Activated CD4-positive, alpha-beta T cell treated with anti-CD3 and anti-CD28 coated beads, Interleukin-2, amount 10 ng/mL, durations not matched to agents 24 days and 14 days (primary cell): ENCODE measurements at regions of chr2 and their contacts with region 1.

Region 1: DNA sequence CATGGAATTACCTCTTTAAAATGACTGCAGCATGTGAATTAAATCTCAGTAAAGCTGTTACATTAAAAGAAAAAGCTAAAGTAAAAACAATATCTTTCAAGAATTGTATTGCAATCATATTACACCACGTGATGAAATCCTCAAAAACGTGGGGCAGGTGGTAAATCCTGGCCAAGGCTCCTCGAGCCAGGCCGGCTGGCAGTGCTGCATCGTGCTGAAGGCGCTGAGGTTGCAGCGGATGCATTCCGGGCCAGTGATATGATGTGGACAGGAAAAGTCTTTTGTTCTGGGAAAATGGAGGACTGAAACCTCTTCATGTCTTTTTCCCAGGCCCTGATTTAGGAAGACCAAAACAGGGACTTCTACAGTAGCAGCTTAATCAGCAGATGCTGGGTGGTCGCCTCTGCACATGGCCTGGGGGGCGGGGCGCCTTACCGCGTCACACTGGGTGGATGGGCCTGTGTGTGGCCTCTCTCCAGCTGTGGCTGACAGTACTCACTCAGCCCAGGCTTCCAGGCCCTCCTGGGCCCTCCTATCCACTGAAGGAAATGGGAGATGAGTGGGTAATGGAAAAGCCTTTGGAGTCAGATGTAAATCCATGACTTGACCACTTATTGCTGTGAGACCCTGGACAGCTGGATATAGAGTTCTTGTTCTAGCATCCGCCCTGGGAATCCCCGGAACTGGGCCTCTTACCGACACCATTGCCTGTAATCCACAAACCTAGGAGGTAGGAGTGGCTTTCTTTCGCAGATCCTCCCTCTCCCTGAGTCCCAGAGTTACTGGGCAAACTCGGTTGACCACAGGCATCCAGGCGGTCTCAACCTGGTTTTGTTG is 45.1 kb downstream of the PROC start:
- DNase-seq: no peak
- H3K4me3 Mint-ChIP-seq: no peak overlapping the region
- H3K27ac Mint-ChIP-seq: no peak overlapping the region
- H3K4me1 Mint-ChIP-seq: peaks cover 24% of the 10 kb centered on the region
- H3K27me3 Mint-ChIP-seq: no peaks in the 10 kb centered on the region

Region 2: DNA sequence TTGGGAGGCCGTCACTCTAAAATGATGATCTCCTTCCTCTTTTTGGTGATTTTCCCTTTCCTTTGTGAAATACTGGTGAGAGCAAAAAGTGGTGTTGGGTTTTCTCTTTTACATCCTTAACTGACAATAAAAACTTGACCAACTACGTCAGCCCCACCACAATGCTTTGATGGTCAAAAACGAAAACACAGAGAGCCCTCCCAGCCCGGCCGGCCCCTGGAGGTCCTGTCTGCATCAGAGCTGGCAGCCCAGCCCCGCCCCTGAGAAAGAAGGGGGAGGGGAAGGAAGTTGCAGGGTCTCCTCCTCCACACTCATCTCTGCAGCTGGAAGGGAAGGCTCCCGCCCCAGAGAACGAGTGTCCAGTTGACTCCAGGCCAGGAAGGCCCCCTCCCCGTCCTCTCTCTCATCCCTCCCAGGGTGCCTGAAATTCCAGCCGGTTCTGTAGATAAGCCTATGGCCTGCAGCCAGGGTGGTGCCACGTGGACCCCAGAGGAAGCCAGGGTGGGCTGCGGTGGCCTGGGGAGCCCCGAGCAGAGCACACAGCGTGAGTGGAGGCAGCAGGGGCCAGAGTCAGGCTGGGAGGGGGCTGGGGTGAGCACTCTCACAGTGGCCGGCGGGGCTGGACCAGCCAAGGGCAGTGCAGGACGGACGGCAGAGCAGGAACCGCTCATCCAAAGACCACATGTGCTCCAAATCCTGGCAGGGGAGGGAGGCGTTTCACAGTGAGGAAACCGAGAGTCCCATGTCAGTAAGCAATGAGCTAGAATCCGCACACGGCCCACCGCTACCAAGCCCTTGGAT is 376.2 kb before region 1 on chr2:
- intact Hi-C with region 1: loop called (anchors 10 kb)
- DNase-seq: no peak
- H3K4me3 Mint-ChIP-seq: no peak overlapping the region
- H3K27ac Mint-ChIP-seq: no peak overlapping the region
- H3K4me1 Mint-ChIP-seq: peaks cover 27% of the 10 kb centered on the region
- H3K27me3 Mint-ChIP-seq: peaks cover 7% of the 10 kb centered on the region

Region 3: GRCh38 chr2:127355386-127356008 is 107.9 kb before region 1 on chr2:
- intact Hi-C with region 1: loop called (anchors 5 kb)
- DNase-seq: peak; percentile 76
- H3K4me3 Mint-ChIP-seq: no peak overlapping the region
- H3K27ac Mint-ChIP-seq: no peak overlapping the region
- H3K4me1 Mint-ChIP-seq: peaks cover 21% of the 10 kb centered on the region
- H3K27me3 Mint-ChIP-seq: no peaks in the 10 kb centered on the region

Region 4: DNA sequence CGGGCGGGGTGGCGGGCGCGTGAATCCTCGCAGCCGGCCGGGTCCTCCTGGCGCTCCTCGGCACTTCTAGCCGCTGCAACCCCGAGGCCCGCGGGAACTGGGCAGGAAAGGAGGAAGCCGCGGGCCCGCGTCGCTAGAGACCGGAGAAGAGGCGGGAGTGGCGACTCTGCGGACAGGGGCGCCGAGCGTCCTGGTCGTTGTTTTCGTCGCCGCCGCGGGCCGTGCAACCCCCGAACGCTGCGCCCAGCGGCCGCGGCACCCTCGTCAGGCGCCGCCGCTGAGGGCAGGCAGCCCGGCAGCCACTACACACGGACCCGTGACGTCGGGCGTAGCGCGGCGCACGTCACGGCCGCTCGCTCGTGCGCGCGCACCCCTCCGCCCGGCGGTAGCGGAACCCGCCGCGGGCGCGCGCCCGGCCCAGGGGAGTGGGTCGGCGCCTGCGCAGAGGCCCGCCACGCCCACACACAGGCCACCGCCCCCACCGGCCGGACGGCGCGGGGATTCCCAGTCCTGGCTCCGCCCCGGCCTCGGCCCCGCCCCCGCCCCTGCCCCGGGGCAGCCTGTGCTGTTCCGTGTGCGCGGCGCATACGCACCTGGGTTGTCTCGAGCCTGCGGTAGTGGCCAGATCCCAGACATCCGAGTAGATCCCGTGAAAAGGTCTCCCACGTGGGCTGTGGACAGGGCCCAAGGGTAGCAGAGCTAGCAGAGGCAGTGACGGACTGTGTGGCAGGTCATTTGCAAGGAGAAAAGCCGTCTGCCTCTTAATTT is 75.5 kb before region 1 on chr2 and contains the start of gene MAP3K2:
- intact Hi-C with region 1: loop called (anchors 2 kb)
- DNase-seq: peak; percentile 98
- H3K4me3 Mint-ChIP-seq: peak within 1 kb of the TSS; percentile 88
- H3K27ac Mint-ChIP-seq: peak within 1 kb of the TSS; percentile 98
- H3K4me1 Mint-ChIP-seq: peaks cover 63% of the 10 kb centered on the region
- H3K27me3 Mint-ChIP-seq: no peaks in the 10 kb centered on the region
- total RNA-seq, gene MAP3K2: 53.7 and 57.5 TPM in 2 replicates

Region 5: DNA sequence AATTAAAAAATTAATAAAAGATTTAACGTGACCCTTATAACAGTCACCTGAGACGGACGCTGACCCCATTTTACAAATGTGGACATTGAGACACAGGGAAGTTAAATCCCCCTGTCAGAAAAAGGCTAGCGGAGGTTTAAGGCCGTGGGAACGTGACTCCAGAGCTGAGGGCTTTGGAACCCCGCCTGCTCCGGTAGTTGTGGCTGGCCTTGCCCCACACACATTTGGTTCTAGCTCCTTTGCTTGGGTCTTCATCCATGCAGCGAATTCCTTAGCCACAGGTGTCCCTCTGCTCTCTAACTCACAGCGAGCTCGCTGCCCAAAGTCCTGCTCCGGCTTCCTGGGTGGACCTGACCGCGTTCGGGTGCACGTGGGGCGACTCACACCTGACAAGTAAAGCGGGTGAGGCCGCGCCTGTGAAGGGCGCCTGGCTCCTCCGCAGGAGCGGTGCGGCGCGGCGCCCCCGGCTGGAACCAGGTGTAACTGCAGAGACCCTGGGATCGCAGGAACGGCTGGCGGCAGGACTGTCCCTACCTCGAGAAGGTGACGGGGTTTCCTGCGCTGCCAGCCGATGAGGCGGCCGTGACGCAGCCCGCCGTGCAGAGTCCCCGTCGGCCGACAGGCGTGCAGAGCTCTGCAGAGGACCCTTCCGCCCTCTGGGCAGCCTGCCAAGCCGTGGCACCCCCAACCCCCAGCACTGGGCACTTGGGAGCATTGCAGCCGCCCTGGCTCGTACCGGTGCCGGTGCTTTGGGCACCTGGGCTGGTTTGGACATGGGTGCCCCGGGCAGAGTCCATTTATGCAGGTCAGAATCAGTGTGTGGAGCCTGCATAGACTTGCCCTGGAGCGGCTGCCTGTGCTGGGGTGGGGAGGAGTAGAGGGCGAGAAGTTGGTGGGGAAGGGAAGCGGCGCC is 47.5 kb before region 1 on chr2:
- intact Hi-C with region 1: loop called (anchors 2 kb)
- DNase-seq: peak; percentile 92
- H3K4me3 Mint-ChIP-seq: peak overlapping the region; percentile 81
- H3K27ac Mint-ChIP-seq: peak overlapping the region; percentile 56
- H3K4me1 Mint-ChIP-seq: peaks cover 30% of the 10 kb centered on the region
- H3K27me3 Mint-ChIP-seq: peaks cover 26% of the 10 kb centered on the region

Region 6: GRCh38 chr2:127516031-127516762 is 52.8 kb after region 1 on chr2:
- intact Hi-C with region 1: no loop called
- DNase-seq: no peak
- H3K4me3 Mint-ChIP-seq: no peak overlapping the region
- H3K27ac Mint-ChIP-seq: peak overlapping the region; percentile 41
- H3K4me1 Mint-ChIP-seq: peaks cover 42% of the 10 kb centered on the region
- H3K27me3 Mint-ChIP-seq: no peaks in the 10 kb centered on the region